Body of pancreas (tissue), 4 donors: ENCODE measurements at regions of chr12 and their contacts with region 1.

Region 1: DNA sequence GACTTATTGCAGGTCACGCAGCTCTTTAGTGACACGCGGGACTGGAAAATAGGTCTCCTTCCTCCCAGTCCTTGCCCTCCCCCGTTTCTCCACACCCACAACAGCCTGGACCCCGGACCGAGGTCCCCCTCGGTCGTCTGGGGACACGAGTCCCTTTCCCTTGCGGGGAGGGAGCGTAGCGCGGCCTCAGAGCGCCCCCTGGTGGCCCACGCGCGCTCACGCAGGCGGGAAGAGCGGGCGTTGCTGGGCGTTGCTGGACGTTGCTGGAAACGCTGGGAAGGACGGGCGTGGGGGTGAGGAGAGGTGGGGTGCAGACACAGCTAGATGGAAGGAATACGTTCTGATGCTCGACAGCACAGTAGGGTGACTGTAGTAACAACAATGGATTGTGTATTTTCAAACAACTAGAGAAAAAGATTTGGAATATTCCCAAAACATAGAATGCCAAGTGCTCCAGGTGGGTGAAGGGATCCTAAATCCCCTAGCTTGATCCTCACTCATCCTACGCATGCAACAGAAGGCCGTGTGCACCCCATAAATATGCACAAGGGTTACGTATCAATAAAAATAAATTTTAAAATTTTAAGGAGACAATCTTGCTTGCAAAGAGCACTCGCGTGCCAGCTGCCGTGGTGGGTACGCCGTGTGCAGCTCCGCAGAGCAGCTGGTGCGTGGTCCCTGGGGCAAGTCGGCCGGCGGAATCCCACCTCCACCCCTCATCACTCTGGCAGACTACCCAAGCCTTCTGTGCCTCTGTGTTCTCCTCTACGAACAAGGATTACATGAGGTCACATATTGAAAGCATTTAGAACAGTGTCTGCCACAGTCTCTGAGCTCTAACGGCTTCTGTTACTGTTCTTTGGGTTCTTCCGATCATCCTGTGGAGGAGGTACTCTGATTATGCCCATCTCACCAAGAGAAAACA is 87.4 kb downstream of the B4GALNT3 start:
- DNase-seq: peak; percentile 54 to 72 (median 64)
- ATAC-seq: peak; percentile 79
- H3K4me3 ChIP-seq: no peak overlapping the region
- H3K27ac ChIP-seq: no peak overlapping the region
- H3K4me1 ChIP-seq: peaks cover 6% of the 10 kb centered on the region
- H3K27me3 ChIP-seq: no peaks in the 10 kb centered on the region
- CTCF ChIP-seq: peak; percentile 93 to 99 (median 98)
- POLR2A ChIP-seq: no peak

Region 2: DNA sequence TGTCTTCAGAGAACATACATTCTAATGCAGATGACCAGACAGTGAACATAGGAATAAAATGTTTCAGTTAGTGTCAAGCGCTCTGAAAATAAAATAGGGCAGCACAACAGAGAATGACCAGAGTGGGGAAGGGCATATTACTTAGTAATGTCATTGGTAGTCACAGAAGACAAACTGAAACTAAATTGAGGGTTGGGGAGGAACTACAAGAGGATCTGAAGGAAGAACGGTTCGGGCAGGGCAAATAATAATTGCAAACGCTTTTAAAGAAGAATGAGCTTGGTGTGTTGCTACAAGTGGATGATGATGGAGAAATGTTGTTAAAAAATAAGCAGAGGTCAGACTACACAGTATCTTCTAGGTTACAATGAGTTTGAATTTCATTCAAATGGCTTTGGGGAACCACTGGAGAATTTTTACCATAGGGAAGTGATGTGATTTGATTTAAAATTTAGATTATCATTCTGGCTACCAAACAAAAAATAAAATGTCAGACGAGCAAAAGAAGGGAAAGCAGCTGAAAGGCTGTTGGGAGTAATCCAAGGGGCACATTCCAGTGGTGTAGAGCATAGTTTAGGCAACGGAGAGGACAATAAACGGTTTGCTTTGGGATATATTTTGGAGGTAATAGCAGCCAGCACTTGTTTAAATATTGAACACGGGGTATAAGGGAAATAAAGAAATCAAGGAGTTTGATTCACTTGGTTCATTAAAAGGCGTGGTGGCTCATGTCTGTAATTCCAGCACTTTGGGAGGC is 228.2 kb before region 1 on chr12:
- intact Hi-C with region 1: no loop called
- DNase-seq: no peak
- ATAC-seq: no peak
- H3K4me3 ChIP-seq: no peak overlapping the region
- H3K27ac ChIP-seq: no peak overlapping the region
- H3K4me1 ChIP-seq: peaks cover 15% of the 10 kb centered on the region
- H3K27me3 ChIP-seq: no peaks in the 10 kb centered on the region
- CTCF ChIP-seq: no peak
- POLR2A ChIP-seq: no peak

Region 3: DNA sequence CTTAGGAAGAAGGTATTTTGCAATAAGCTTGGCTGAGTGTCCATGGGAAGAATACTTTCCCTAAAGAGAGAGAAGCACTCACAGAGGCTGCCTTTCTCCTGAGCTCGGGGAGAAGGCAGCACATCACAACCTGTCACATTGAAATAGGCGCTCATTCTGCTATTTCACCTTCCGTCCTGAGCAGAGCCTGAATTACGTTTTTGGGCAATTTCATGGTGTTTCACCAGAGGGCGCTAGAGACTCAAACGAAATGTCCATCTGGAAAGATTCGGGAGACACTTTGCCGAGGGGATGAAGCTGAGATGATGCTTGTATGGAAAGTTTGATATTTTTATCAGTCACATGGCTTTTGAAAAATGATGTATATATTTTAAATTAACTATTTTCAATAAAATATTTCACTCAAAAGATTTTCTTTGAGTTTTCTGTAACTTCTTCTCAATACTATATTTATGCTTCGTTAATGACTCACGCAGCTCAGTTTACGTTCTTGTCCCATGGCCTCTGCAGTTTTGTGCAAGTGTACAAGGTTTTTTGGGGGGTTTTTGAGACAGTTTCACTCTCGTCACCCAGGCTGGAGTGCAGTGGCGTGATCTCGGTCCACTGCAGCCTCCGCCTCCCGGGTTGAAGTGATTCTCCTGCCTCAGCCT is 104.8 kb before region 1 on chr12:
- intact Hi-C with region 1: loop called (anchors 5 kb)
- DNase-seq: peak; percentile 57 to 75 (median 66)
- ATAC-seq: peak; percentile 55
- H3K4me3 ChIP-seq: no peak overlapping the region
- H3K27ac ChIP-seq: no peak overlapping the region
- H3K4me1 ChIP-seq: no peaks in the 10 kb centered on the region
- H3K27me3 ChIP-seq: no peaks in the 10 kb centered on the region
- CTCF ChIP-seq: peak; percentile 46 to 83 (median 79)
- POLR2A ChIP-seq: no peak

Region 4: GRCh38 chr12:459430-460258 is 87.5 kb before region 1 on chr12 and contains the start of gene B4GALNT3:
- intact Hi-C with region 1: loop called (anchors 5 kb)
- DNase-seq: peak; percentile 66 to 74 (median 70)
- ATAC-seq: peak; percentile 89
- H3K4me3 ChIP-seq: peak within 1 kb of the TSS; percentile 16 to 61
- H3K27ac ChIP-seq: peak within 1 kb of the TSS in 3 of 4 donors; percentile 6 to 37 (median 33)
- H3K4me1 ChIP-seq: peaks cover 14% of the 10 kb centered on the region
- H3K27me3 ChIP-seq: no peaks in the 10 kb centered on the region
- CTCF ChIP-seq: no peak
- POLR2A ChIP-seq: peak; percentile 11 to 41 (median 37)
- total RNA-seq, gene B4GALNT3: 4.0 to 9.3 TPM

Region 5: DNA sequence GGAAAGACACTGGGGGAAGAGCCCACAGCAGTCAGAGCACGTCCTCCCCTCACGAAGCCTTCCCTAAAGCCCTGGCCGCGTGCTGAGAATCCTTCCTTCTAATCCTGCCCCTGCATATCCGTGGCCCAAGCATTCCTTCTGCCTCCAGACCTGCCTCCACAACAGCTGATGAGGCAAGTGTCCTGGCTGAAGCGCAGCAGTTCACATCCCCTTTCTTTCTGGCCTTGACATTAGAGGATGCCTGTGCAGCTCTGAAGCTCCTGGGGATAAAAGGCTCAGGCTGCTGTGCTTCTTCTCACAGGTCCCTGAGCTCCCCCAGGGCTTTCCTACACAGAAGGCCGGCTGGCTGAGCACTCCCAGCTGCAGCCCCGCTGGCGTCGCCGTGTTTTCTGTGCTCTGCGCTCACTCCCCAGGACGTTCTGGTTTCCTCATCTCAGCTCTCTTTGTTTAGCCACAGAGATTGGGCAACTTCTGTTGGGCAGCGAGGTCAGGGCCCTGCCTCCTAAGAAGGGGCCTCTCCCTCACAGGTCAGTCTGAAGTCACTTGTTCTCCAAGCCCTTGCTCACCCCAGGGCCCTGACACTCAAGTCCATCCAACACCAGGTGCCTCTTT is 70.2 kb after region 1 on chr12:
- intact Hi-C with region 1: no loop called
- DNase-seq: peak in 2 of 4 donors; percentile 29 to 60
- ATAC-seq: no peak
- H3K4me3 ChIP-seq: no peak overlapping the region
- H3K27ac ChIP-seq: peak overlapping the region in 1 of 4 donors; percentile 57
- H3K4me1 ChIP-seq: no peaks in the 10 kb centered on the region
- H3K27me3 ChIP-seq: no peaks in the 10 kb centered on the region
- CTCF ChIP-seq: no peak
- POLR2A ChIP-seq: peak in 1 of 3 donors; percentile 20

Region 6: GRCh38 chr12:761256-761655 is 214.1 kb after region 1 on chr12:
- intact Hi-C with region 1: no loop called
- DNase-seq: no peak
- ATAC-seq: no peak
- H3K4me3 ChIP-seq: no peak overlapping the region
- H3K27ac ChIP-seq: no peak overlapping the region
- H3K4me1 ChIP-seq: peaks cover 8% of the 10 kb centered on the region
- H3K27me3 ChIP-seq: no peaks in the 10 kb centered on the region
- CTCF ChIP-seq: no peak
- POLR2A ChIP-seq: no peak